ENCODE measurements at regions of chr4 and their contacts with region 1.

Region 1: GRCh38 chr4:3747581-3747904 is 18.6 kb upstream of the ADRA2C start:
- DNase-seq: peak; percentile 39 to 93
- H3K4me3 ChIP-seq: no peak overlapping the region
- H3K27ac ChIP-seq: no peak overlapping the region
- H3K4me1 ChIP-seq: peaks cover 0 to 20% (median 8%) of the 10 kb centered on the region in 4 experiments; a peak in 6 of 7 replicates
- H3K27me3 ChIP-seq: no peaks in the 10 kb centered on the region; a peak in 2 of 7 replicates
- CTCF ChIP-seq: peak in 2 of 3 experiments; percentile 75 to 81; a peak in 3 of 4 replicates
- EP300 ChIP-seq: no peak
- POLR2A ChIP-seq: no peak
- RAD21 ChIP-seq: peak; percentile 51 to 64; a peak in 3 of 4 replicates

Region 2: DNA sequence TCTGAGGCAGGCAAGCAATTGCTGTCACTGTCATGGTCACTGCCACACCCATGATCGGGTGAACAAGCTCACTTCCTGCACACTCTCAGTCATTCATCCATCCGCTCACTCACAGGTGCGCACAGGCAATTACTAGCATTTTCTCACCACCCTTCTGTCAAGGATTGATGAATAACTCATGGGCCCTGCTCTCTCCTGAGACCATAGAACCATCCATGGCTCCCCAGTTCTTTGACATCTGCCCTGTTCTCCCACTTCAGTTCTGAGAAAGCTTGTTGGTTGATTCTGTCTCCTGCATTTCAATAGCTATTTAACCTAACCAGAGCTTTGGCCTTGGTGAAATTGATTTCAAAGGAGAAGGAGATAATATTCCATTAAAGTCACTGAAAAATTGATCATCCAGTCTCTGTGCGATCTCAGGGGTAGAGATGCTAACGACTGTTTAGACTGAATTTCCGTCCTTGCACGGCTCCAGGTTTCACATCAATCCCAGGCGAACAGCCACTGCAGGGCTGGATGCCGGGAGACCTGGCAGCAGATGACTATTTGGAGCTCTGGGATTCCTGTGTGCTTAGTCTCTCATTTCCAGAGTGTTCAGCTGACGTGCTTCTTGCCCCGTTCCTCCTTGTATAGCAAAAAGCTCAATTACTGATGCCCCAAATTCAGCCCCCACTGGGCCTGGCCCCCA is 18.2 kb before region 1 on chr4:
- CTCF ChIA-PET with region 1: interaction called, 25 read pairs
- POLR2A ChIA-PET with region 1: interaction called, 5 read pairs
- DNase-seq: no peak
- H3K4me3 ChIP-seq: no peak overlapping the region
- H3K27ac ChIP-seq: no peak overlapping the region
- H3K4me1 ChIP-seq: peaks cover 0 to 47% (median 27%) of the 10 kb centered on the region in 4 experiments; a peak in 6 of 7 replicates
- H3K27me3 ChIP-seq: peaks cover 0 to 19% (median 16%) of the 10 kb centered on the region in 4 experiments; a peak in 5 of 7 replicates
- CTCF ChIP-seq: no peak
- EP300 ChIP-seq: no peak
- POLR2A ChIP-seq: no peak
- RAD21 ChIP-seq: no peak

Region 3: DNA sequence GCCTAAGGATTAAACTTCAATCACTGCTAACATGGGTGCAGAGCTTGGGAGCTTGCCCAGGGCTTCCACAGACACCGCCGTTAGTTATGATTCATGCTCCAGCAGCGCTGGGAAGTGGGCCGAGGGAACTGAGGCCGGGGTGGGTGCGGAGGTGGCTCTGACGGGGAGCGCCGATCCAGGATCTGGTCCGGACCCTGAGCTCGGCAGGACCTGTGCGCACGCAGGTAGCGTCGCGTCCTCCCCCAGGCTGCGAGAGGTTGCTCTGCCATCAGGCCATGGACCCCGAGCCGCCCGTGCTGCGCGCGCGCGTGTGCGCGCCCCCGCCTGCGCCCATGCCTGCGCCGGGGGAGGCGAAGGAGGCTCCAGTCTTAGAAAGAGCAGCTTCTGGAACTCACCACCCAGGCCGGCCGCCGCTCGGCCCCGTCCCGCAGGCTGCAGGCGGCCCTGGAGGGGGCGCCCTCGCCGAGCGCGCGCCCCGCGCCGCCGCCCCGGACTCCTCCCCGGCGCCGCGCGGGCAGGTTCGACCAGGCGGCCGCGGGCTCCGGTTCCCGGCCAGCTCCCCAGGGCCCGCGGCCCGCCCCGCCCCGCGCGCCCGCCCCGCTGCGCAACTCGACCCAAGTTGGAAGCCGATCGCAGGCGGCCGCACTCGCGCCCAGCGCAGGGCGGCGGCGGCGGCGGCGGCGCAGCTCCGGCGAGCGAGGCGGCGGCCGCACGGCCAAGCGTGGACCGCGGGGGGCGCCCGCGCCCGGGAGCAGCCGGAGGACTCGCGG is 17.9 kb after region 1 on chr4:
- CTCF ChIA-PET with region 1: interaction called, 90 read pairs
- POLR2A ChIA-PET with region 1: interaction called, 7 read pairs
- DNase-seq: peak in 1 of 2 experiments; percentile 83
- H3K4me3 ChIP-seq: peak overlapping the region; percentile 38 to 59 (median 46)
- H3K27ac ChIP-seq: no peak overlapping the region
- H3K4me1 ChIP-seq: peaks cover 0 to 13% (median 4%) of the 10 kb centered on the region in 4 experiments; a peak in 5 of 7 replicates
- H3K27me3 ChIP-seq: peaks cover 4 to 38% (median 28%) of the 10 kb centered on the region in 4 experiments
- CTCF ChIP-seq: peak in 2 of 3 experiments; percentile 43 to 50; a peak in 3 of 4 replicates
- EP300 ChIP-seq: no peak
- POLR2A ChIP-seq: no peak
- RAD21 ChIP-seq: no peak; a peak in 2 of 4 replicates

Region 4: DNA sequence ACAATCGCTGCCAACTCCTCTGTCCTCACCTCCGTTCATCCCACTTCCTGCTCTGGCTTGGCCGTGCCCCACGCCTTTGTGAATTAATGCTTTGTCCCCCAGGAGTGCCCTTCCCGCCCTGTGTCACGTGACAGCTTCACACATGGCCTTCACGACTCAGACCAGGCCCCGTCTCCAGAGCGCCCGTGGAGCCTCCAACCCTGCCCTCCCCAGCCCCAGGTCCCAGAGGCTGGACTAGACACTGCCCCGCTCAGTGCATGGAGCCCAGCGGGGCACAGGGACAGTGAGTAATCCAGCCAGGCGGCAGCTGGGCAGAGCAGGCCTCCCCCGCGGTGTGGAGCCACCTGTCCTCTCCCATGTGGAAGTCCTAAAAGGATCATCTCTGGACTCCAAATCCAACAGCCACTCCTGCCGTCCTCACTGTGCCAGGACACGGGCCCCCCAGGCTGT is 26.0 kb after region 1 on chr4:
- CTCF ChIA-PET with region 1: interaction called, 90 read pairs
- POLR2A ChIA-PET with region 1: interaction called, 3 read pairs
- DNase-seq: no peak
- H3K4me3 ChIP-seq: no peak overlapping the region
- H3K27ac ChIP-seq: no peak overlapping the region
- H3K4me1 ChIP-seq: peaks cover 0 to 5% (median 0%) of the 10 kb centered on the region in 4 experiments; a peak in 3 of 7 replicates
- H3K27me3 ChIP-seq: peaks cover 0 to 5% (median under 1%) of the 10 kb centered on the region in 4 experiments; a peak in 3 of 7 replicates
- CTCF ChIP-seq: no peak
- EP300 ChIP-seq: no peak
- POLR2A ChIP-seq: no peak
- RAD21 ChIP-seq: no peak

Region 5: GRCh38 chr4:3783406-3784306 is 36.1 kb after region 1 on chr4:
- CTCF ChIA-PET with region 1: interaction called, 44 read pairs
- POLR2A ChIA-PET with region 1: interaction called, 3 read pairs
- DNase-seq: peak in 1 of 2 experiments; percentile 86
- H3K4me3 ChIP-seq: no peak overlapping the region
- H3K27ac ChIP-seq: no peak overlapping the region
- H3K4me1 ChIP-seq: peaks cover 0 to 9% (median 8%) of the 10 kb centered on the region in 4 experiments; a peak in 5 of 7 replicates
- H3K27me3 ChIP-seq: no peaks in the 10 kb centered on the region
- CTCF ChIP-seq: peak in 2 of 3 experiments; percentile 79 to 81; a peak in 3 of 4 replicates
- EP300 ChIP-seq: no peak
- POLR2A ChIP-seq: no peak
- RAD21 ChIP-seq: peak; percentile 81 to 85

Region 6: GRCh38 chr4:3807822-3808496 is 60.4 kb after region 1 on chr4:
- CTCF ChIA-PET with region 1: interaction called, 11 read pairs
- POLR2A ChIA-PET with region 1: no interaction called
- DNase-seq: no peak
- H3K4me3 ChIP-seq: peak overlapping the region in 2 of 4 experiments; percentile 2 to 18; a peak in 2 of 8 replicates
- H3K27ac ChIP-seq: no peak overlapping the region
- H3K4me1 ChIP-seq: peaks cover 0 to 7% (median 5%) of the 10 kb centered on the region in 4 experiments; a peak in 6 of 7 replicates
- H3K27me3 ChIP-seq: peaks cover 0 to 3% (median 1%) of the 10 kb centered on the region in 4 experiments; a peak in 1 of 7 replicates
- CTCF ChIP-seq: no peak
- EP300 ChIP-seq: no peak
- POLR2A ChIP-seq: no peak
- RAD21 ChIP-seq: no peak

Region 7: DNA sequence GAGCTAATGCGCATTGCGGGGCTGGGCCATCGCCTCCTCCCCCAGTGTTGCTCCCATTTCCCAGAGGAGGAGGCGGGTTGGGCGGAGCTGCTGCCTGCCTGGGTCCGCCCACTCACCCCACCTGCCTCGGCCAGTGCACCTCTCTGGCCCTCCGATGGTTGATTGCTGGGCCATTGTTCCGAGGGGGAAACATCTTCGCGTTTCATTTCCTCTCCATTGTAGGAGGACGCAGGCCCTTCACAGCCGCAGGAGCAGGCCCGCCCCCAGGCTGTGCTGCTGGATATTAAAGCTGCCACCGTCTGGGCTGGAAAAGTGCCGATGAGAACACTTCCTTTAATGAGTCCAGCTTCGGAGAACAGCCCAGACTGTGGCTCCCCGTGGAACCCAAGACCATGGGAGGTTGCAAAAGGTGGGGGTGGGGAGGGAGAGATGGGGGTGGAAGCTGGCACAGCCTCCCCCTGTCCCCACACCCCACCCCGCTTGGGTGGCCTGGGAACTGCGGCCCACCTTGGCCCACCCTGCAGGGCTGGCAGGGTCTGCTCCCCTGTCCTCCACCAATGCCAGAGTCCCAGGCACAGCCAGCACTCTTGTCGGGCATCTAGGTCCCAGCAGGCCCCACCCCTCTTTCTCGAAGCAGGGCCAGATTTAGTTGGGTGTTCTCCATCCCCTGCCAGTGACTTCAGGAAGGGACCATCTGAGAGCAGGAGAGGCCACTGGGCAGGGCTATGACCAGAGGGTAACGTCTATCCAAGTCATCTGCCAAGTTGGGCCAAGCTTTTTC is 115.3 kb after region 1 on chr4:
- CTCF ChIA-PET with region 1: interaction called, 12 read pairs
- POLR2A ChIA-PET with region 1: no interaction called
- DNase-seq: peak; percentile 70 to 87
- H3K4me3 ChIP-seq: peak overlapping the region; percentile 4 to 51 (median 24); a peak in 5 of 8 replicates
- H3K27ac ChIP-seq: peak overlapping the region; percentile 62
- H3K4me1 ChIP-seq: peaks cover 3 to 23% (median 15%) of the 10 kb centered on the region in 4 experiments
- H3K27me3 ChIP-seq: no peaks in the 10 kb centered on the region
- CTCF ChIP-seq: no peak
- EP300 ChIP-seq: no peak
- POLR2A ChIP-seq: peak in 1 of 2 experiments; percentile 44; a peak in 1 of 3 replicates
- RAD21 ChIP-seq: no peak; a peak in 1 of 4 replicates